ENCODE measurements at regions of chr4 and their contacts with region 1.

Region 1: GRCh38 chr4:105186701-105187161 is 40.1 kb downstream of the TET2 start:
- DNase-seq: no peak
- ATAC-seq: peak in 1 of 2 donors; percentile 31
- H3K4me3 ChIP-seq: no peak overlapping the region
- H3K27ac ChIP-seq: no peak overlapping the region
- H3K4me1 ChIP-seq: peaks cover 43 to 55% of the 10 kb centered on the region in 2 donors
- H3K27me3 ChIP-seq: no peaks in the 10 kb centered on the region
- CTCF ChIP-seq: no peak
- POLR2A ChIP-seq: no peak

Region 2: GRCh38 chr4:105146276-105147015 is 40.3 kb before region 1 on chr4 and contains the start of gene TET2:
- in situ Hi-C with region 1: no loop called
- intact Hi-C with region 1: loop called (anchors 5 kb)
- DNase-seq: peak; percentile 54 to 70
- ATAC-seq: peak; percentile 69 to 75
- H3K4me3 ChIP-seq: peak within 1 kb of the TSS; percentile 76 to 93 (median 84)
- H3K27ac ChIP-seq: peak within 1 kb of the TSS; percentile 86 to 91 (median 88)
- H3K4me1 ChIP-seq: peaks cover 28 to 30% of the 10 kb centered on the region in 2 donors
- H3K27me3 ChIP-seq: no peaks in the 10 kb centered on the region
- CTCF ChIP-seq: peak in 2 of 5 experiments; percentile 13 to 21
- POLR2A ChIP-seq: peak; percentile 77 to 85
- total RNA-seq, gene TET2: 12.9 to 18.0 (median 16.4) TPM

Region 3: DNA sequence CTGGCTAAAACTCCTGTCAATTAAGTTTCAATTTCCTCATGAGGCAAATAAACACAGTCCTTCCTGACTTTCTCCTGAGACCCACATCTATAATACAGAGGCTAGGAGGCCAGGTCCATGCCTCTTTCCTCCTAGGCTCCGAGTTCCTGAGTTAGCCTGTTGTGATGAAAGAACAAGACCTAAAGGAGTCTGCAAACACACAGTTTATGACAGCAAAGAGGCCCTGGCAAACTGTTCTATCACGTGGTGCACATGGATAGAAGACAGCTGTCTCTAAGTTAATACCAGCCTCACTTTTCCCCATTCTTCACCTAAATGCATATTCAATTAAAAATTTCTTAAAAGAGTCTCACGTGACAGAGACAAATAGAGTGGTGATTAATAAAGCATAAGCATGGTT is 105.2 kb after region 1 on chr4:
- in situ Hi-C with region 1: no loop called
- intact Hi-C with region 1: no loop called
- DNase-seq: no peak
- ATAC-seq: no peak
- H3K4me3 ChIP-seq: no peak overlapping the region
- H3K27ac ChIP-seq: no peak overlapping the region
- H3K4me1 ChIP-seq: no peaks in the 10 kb centered on the region
- H3K27me3 ChIP-seq: no peaks in the 10 kb centered on the region
- CTCF ChIP-seq: no peak
- POLR2A ChIP-seq: no peak

Measured in gastrocnemius medialis (tissue), 4 donors.